CD14-positive monocyte (primary cell): ENCODE measurements at regions of chr1 and their contacts with region 1.

Region 1: GRCh38 chr1:51636764-51637522 is 20.1 kb downstream of the OSBPL9 start:
- DNase-seq: no peak
- H3K4me3 ChIP-seq: no peak overlapping the region
- H3K4me3 Mint-ChIP-seq: no peak overlapping the region
- H3K27ac ChIP-seq: no peak overlapping the region
- H3K27ac Mint-ChIP-seq: peak overlapping the region in 5 of 7 donors; percentile 4 to 30 (median 20)
- H3K4me1 ChIP-seq: peaks cover 0 to 6% of the 10 kb centered on the region in 2 donors
- H3K4me1 Mint-ChIP-seq: peaks cover 26% of the 10 kb centered on the region
- H3K27me3 ChIP-seq: no peaks in the 10 kb centered on the region
- H3K27me3 Mint-ChIP-seq: peaks cover 0 to 1% (median 0%) of the 10 kb centered on the region in 3 donors
- CTCF ChIP-seq: no peak

Region 2: GRCh38 chr1:51690285-51690961 is 53.5 kb after region 1 on chr1:
- intact Hi-C with region 1: loop called in 1 of 2 experiments (anchors 10 kb)
- DNase-seq: peak; percentile 76 to 86 (median 84)
- H3K4me3 ChIP-seq: peak overlapping the region in 1 of 3 experiments; percentile 30
- H3K4me3 Mint-ChIP-seq: peak overlapping the region in 1 of 2 donors; percentile 39
- H3K27ac ChIP-seq: peak overlapping the region in 1 of 2 donors; percentile 82
- H3K27ac Mint-ChIP-seq: peak overlapping the region in 6 of 7 donors; percentile 75 to 89 (median 87)
- H3K4me1 ChIP-seq: peaks cover 12 to 29% of the 10 kb centered on the region in 2 donors
- H3K4me1 Mint-ChIP-seq: peaks cover 27% of the 10 kb centered on the region
- H3K27me3 ChIP-seq: no peaks in the 10 kb centered on the region
- H3K27me3 Mint-ChIP-seq: no peaks in the 10 kb centered on the region
- CTCF ChIP-seq: no peak

Region 3: DNA sequence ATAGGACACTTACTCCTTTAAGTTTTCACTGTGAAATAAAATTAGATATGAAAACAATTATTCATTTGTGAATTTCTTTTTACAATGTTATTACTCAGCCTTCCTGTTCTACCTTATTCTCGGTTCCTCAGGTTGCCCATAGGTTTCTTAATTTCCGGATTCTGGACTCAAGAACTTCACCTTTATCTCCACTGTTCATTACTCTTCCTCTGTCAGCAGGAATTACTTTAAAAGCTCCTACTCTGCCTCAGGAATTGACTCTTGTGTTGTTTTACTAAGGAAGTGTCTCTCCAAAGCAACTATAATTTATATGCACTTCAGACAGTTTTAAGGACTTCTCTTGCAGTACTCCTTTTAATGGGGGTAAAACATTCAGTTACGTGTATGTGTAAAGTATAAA is 103.7 kb after region 1 on chr1:
- intact Hi-C with region 1: loop called in 1 of 2 experiments (anchors 10 kb)
- DNase-seq: no peak
- H3K4me3 ChIP-seq: no peak overlapping the region
- H3K4me3 Mint-ChIP-seq: no peak overlapping the region
- H3K27ac ChIP-seq: no peak overlapping the region
- H3K27ac Mint-ChIP-seq: no peak overlapping the region
- H3K4me1 ChIP-seq: no peaks in the 10 kb centered on the region
- H3K4me1 Mint-ChIP-seq: peaks cover 11% of the 10 kb centered on the region
- H3K27me3 ChIP-seq: no peaks in the 10 kb centered on the region
- H3K27me3 Mint-ChIP-seq: no peaks in the 10 kb centered on the region
- CTCF ChIP-seq: no peak